Mammary epithelial cell (primary cell): ENCODE measurements at regions of chr4 and their contacts with region 1.

Region 1: GRCh38 chr4:116180157-116180601 is 905.2 kb downstream of the TRAM1L1 start:
- DNase-seq: peak; percentile 4
- H3K4me3 ChIP-seq: no peak overlapping the region
- H3K27ac ChIP-seq: no peak overlapping the region
- H3K4me1 ChIP-seq: no peaks in the 10 kb centered on the region
- H3K27me3 ChIP-seq: no peaks in the 10 kb centered on the region
- CTCF ChIP-seq: peak; percentile 37 to 55

Region 2: GRCh38 chr4:116150152-116150551 is 30.0 kb before region 1 on chr4:
- CTCF ChIA-PET with region 1: no interaction called
- dilution Hi-C with region 1: no loop called
- in situ Hi-C with region 1: no loop called
- intact Hi-C with region 1: no loop called
- DNase-seq: no peak
- H3K4me3 ChIP-seq: no peak overlapping the region
- H3K27ac ChIP-seq: no peak overlapping the region
- H3K4me1 ChIP-seq: no peaks in the 10 kb centered on the region
- H3K27me3 ChIP-seq: peaks cover 2% of the 10 kb centered on the region
- CTCF ChIP-seq: peak; percentile 13 to 34

Region 3: GRCh38 chr4:117560329-117560728 is 1380.2 kb after region 1 on chr4:
- CTCF ChIA-PET with region 1: no interaction called
- dilution Hi-C with region 1: no loop called
- in situ Hi-C with region 1: no loop called
- intact Hi-C with region 1: loop called (anchors 10 kb)
- DNase-seq: peak; percentile 19
- H3K4me3 ChIP-seq: no peak overlapping the region
- H3K27ac ChIP-seq: no peak overlapping the region
- H3K4me1 ChIP-seq: no peaks in the 10 kb centered on the region
- H3K27me3 ChIP-seq: no peaks in the 10 kb centered on the region
- CTCF ChIP-seq: peak; percentile 22 to 26